ENCODE measurements at regions of chr14 and their contacts with region 1.

Region 1: DNA sequence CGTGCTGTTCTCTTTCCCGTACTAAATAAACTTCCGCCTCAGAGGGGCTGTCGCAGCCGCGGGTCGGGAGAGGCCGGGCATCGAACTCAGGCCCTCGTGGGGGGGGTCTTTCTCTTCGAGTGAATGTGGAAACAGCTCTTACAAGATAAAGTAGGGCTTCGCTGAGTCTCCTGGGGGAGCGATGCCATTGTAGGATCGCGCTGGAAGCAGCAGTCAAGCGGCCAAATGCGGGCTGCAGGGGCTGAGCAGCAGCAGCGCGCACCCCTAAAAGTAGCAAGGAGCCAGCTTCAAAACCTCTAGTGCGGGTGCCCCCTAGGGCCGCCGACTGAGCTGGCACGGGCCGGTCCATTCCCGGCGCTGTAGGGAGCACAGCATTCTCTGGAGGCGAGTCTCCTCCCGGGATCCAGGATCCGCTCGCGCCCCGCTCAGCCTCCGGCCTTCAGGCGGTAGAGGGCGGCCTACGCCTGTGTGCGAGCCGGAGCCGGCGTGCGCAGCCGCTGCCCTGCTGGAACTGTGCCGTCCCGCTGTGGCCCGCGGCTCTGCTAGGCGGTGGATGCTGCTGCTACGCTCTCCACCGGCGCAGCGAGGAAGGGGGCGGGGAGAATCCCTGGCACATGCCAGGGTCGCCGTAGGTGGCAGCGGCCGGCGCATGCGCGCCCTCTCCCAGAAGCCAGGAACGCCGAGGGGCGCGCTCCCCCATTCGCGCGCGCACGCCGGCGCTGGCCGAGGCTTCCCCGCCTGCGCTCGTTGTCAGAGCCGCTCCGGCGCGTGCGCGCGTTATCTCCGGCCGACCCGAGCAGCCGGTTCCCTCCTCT is at the start of gene FUT8:
- DNase-seq: peak; percentile 96
- H3K4me3 Mint-ChIP-seq: peak within 1 kb of the TSS; percentile 98
- H3K27ac Mint-ChIP-seq: peak within 1 kb of the TSS; percentile 96
- H3K4me1 Mint-ChIP-seq: peaks cover 34% of the 10 kb centered on the region
- H3K27me3 Mint-ChIP-seq: no peaks in the 10 kb centered on the region
- total RNA-seq, gene FUT8: 50.7 to 51.4 TPM

Region 2: DNA sequence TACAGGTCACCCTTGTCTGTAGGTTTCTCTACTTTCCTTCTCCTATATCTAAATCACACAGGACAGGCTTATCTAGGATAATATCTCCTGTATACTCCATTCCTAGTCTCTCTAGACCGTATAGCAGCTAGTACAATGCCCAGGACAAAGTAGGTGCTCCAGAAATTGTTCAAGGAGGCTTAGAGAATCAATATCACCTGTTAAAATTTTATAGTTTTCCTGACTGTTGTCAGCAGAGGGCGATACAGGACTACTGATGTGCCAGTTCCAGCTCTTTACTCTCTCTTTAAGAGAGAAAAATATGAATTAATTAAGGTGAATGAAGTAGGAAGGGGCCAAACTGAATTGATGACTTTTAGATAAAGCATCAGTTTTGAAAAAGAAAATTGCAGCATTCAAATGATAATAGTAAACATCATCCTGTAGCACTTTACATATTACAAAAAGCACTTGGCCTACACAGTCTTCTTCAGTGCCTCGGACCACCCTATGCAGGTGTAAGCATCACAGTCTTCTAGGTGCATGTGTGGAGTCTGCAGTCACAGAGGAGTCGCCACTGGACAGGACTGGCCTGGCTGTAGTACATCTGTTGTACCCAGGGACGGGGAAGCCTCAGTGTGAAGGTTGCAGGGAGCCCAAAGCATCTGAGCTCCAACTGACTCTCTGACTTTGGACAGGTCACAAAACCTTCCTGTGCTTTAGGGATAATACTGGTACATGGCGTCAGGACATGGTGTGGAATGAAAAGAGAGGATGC is 248.0 kb before region 1 on chr14:
- CTCF ChIA-PET with region 1: interaction called, 57 read pairs
- POLR2A ChIA-PET with region 1: interaction called, 4 read pairs
- intact Hi-C with region 1: loop called (anchors 2 kb)
- DNase-seq: peak; percentile 36
- H3K4me3 Mint-ChIP-seq: no peak overlapping the region
- H3K27ac Mint-ChIP-seq: no peak overlapping the region
- H3K4me1 Mint-ChIP-seq: peaks cover 5% of the 10 kb centered on the region
- H3K27me3 Mint-ChIP-seq: no peaks in the 10 kb centered on the region

Region 3: GRCh38 chr14:65222440-65222858 is 189.8 kb before region 1 on chr14:
- CTCF ChIA-PET with region 1: interaction called, 18 read pairs
- POLR2A ChIA-PET with region 1: no interaction called
- intact Hi-C with region 1: loop called (anchors 1 kb)
- DNase-seq: peak; percentile 78
- H3K4me3 Mint-ChIP-seq: no peak overlapping the region
- H3K27ac Mint-ChIP-seq: peak overlapping the region; percentile 45
- H3K4me1 Mint-ChIP-seq: peaks cover 33% of the 10 kb centered on the region
- H3K27me3 Mint-ChIP-seq: no peaks in the 10 kb centered on the region

Region 4: DNA sequence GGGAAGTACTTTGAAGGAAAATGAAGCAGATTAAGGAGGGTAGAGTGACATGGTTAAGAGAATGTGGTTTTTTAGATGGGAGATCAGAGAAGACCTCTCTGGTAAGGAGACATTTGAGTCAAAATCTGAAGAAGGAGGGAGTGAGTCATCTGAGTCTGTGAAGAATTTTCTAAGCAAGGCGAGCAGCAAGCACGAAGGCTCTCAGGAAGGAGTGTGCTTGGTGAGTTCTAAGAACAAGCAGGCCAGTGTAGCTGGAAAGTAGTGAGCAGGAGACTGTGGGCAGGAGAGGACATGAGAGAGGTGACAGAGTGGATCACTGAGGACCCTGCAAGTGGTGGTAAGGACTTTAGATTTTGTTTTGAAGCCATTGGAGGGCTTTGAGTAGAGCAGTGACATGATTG is 76.0 kb before region 1 on chr14:
- CTCF ChIA-PET with region 1: interaction called, 6 read pairs
- POLR2A ChIA-PET with region 1: interaction called, 4 read pairs
- intact Hi-C with region 1: loop called (anchors 1 kb)
- DNase-seq: peak; percentile 73
- H3K4me3 Mint-ChIP-seq: peak overlapping the region; percentile 72
- H3K27ac Mint-ChIP-seq: peak overlapping the region; percentile 90
- H3K4me1 Mint-ChIP-seq: peaks cover 44% of the 10 kb centered on the region
- H3K27me3 Mint-ChIP-seq: no peaks in the 10 kb centered on the region

Region 5: DNA sequence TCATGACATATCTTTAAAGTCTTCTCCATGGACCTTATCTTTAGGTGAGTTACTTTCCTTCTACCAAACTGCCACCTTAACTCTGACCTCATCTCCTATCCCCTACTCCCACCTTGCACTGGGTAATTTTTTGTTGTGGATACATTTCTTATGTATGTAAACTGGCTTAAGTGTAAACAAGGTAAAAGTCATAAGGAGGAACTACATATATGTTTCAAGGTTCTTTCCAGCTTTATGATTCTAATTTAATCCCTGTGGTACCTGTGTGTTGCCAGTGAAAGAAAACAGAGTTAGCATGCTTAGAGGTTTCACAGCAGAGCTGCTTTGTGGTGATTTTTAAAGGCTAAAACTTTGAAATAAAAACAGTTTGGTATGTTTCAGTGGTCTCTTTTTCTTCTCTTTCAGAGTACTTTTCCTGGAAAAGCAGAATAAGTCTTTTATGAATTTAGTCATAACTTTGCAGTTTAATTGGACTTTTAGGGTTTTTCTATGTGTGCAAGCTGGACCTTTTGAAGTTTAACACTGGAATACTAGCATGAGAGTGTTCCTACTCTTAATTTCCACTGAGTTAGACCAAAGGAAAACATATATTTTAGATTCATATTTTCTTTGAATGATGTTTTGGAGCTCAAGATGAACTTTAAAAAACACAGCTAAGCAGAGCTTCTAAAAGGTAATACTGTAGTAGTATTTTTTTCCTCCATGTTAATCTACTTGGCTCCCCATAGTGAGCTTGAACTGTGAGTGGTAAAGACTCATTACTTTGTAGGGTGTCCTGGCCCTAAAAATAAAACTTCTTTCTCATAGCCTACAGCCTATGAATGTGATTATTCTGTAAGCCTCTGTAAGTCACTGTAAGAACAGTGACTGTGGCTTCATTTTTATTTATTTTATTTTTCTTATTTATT is 105.7 kb after region 1 on chr14:
- CTCF ChIA-PET with region 1: interaction called, 14 read pairs
- POLR2A ChIA-PET with region 1: no interaction called
- intact Hi-C with region 1: no loop called
- DNase-seq: no peak
- H3K4me3 Mint-ChIP-seq: no peak overlapping the region
- H3K27ac Mint-ChIP-seq: peak overlapping the region; percentile 38
- H3K4me1 Mint-ChIP-seq: peaks cover 35% of the 10 kb centered on the region
- H3K27me3 Mint-ChIP-seq: no peaks in the 10 kb centered on the region

Region 6: DNA sequence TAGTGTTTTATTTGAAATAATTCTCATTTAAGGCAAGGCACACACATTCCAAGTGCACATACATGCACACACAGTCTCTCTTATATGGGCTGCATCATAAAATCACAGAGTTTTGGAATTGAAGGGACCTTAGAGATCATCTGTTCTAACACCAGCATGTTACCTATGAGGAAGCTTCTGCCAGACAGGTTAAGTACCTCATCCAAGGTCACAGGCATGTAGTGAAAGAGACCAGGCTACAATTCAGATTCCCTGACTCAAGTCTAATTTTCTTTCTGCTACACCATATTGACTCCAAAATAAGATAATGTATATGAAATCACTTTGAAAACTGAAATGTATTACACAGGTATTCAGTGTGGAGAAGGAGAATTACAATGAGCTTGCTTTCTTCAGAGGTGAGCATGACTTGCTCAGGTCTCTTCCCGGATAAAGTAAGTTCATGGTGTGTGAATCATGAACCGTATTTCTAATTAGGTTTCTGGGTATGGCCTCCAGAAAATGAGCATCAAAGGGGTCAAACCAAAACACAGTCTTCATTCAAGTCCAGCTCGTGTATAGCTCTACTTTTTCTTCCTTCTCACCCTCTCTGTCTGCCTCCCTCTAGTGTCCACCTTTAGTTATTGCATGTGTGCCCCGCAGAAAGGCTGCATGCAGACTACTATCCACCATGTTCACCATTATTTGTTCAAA is 412.2 kb after region 1 on chr14:
- CTCF ChIA-PET with region 1: interaction called, 130 read pairs
- POLR2A ChIA-PET with region 1: interaction called, 7 read pairs
- intact Hi-C with region 1: loop called (anchors 1 kb)
- DNase-seq: peak; percentile 66
- H3K4me3 Mint-ChIP-seq: no peak overlapping the region
- H3K27ac Mint-ChIP-seq: no peak overlapping the region
- H3K4me1 Mint-ChIP-seq: peaks cover 5% of the 10 kb centered on the region
- H3K27me3 Mint-ChIP-seq: no peaks in the 10 kb centered on the region

Region 7: GRCh38 chr14:66070509-66071319 is 658.5 kb after region 1 on chr14:
- CTCF ChIA-PET with region 1: interaction called, 24 read pairs
- POLR2A ChIA-PET with region 1: no interaction called
- intact Hi-C with region 1: loop called (anchors 5 kb)
- DNase-seq: peak; percentile 72
- H3K4me3 Mint-ChIP-seq: no peak overlapping the region
- H3K27ac Mint-ChIP-seq: no peak overlapping the region
- H3K4me1 Mint-ChIP-seq: no peaks in the 10 kb centered on the region
- H3K27me3 Mint-ChIP-seq: peaks cover 1% of the 10 kb centered on the region

Region 8: DNA sequence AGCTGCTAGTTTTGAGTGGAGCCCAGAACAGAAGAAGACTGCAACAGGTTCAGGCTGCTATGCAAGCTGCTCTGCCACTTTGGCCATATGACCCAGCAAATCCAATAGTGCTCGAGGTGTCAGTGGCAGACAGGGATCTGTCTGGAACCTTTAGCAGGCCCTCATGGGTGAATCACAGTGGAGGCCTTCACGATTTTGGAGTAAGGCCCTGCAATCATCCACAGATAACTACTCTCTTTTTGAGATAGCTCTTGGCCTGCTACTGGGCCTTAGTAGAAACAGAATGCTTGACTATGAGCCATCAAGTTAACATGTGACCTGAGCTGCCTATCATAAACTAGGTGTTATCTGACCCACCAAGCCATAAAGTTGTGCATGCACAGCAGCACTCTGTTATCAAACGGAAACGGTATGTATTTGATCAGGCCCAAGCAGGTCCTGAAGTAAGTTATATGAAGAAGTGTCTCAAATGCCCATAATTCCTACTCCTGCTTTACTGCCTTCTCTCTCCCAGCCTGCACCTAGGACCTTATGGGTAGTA is 957.0 kb after region 1 on chr14:
- CTCF ChIA-PET with region 1: no interaction called
- POLR2A ChIA-PET with region 1: no interaction called
- intact Hi-C with region 1: no loop called
- DNase-seq: no peak
- H3K4me3 Mint-ChIP-seq: no peak overlapping the region
- H3K27ac Mint-ChIP-seq: no peak overlapping the region
- H3K4me1 Mint-ChIP-seq: no peaks in the 10 kb centered on the region
- H3K27me3 Mint-ChIP-seq: no peaks in the 10 kb centered on the region